ENCODE measurements at regions of chr11 and their contacts with region 1.

Region 1: GRCh38 chr11:6420677-6421076 is 1.8 kb upstream of the APBB1 start:
- DNase-seq: no peak
- H3K4me3 ChIP-seq: no peak overlapping the region
- H3K27ac ChIP-seq: no peak overlapping the region
- H3K4me1 ChIP-seq: peaks cover 17 to 38% (median 30%) of the 10 kb centered on the region in 4 donors
- H3K27me3 ChIP-seq: no peaks in the 10 kb centered on the region
- CTCF ChIP-seq: no peak
- EP300 ChIP-seq: no peak
- POLR2A ChIP-seq: no peak

Region 2: GRCh38 chr11:6389921-6390724 is 30.6 kb before region 1 on chr11 and contains the start of gene SMPD1:
- intact Hi-C with region 1: loop called (anchors 5 kb)
- DNase-seq: peak; percentile 97
- H3K4me3 ChIP-seq: peak within 1 kb of the TSS; percentile 75 to 89 (median 87)
- H3K27ac ChIP-seq: peak within 1 kb of the TSS; percentile 87 to 95 (median 90)
- H3K4me1 ChIP-seq: peaks cover 15 to 36% (median 32%) of the 10 kb centered on the region in 4 donors
- H3K27me3 ChIP-seq: no peaks in the 10 kb centered on the region
- CTCF ChIP-seq: peak in 1 of 3 experiments; percentile 12
- EP300 ChIP-seq: no peak
- POLR2A ChIP-seq: peak; percentile 26
- total RNA-seq, gene SMPD1: 28.2 to 37.9 (median 30.8) TPM